ENCODE measurements at regions of chr9 and their contacts with region 1.

Region 1: GRCh38 chr9:130128733-130129431 is 43.3 kb upstream of the NCS1 start:
- DNase-seq: peak; percentile 29
- H3K4me3 Mint-ChIP-seq: peak overlapping the region; percentile 80
- H3K27ac Mint-ChIP-seq: peak overlapping the region; percentile 95
- H3K4me1 Mint-ChIP-seq: peaks cover 46% of the 10 kb centered on the region
- H3K27me3 Mint-ChIP-seq: no peaks in the 10 kb centered on the region

Region 2: GRCh38 chr9:130172161-130172857 is 43.4 kb after region 1 on chr9 and contains the start of gene NCS1:
- intact Hi-C with region 1: loop called (anchors 2 kb)
- DNase-seq: peak; percentile 6
- H3K4me3 Mint-ChIP-seq: peak within 1 kb of the TSS; percentile 73
- H3K27ac Mint-ChIP-seq: peak within 1 kb of the TSS; percentile 44
- H3K4me1 Mint-ChIP-seq: no peaks in the 10 kb centered on the region
- H3K27me3 Mint-ChIP-seq: peaks cover 31% of the 10 kb centered on the region
- total RNA-seq, gene NCS1: 3.9 and 4.2 TPM in 2 replicates

Region 3: GRCh38 chr9:130243015-130243734 is 114.3 kb after region 1 on chr9:
- intact Hi-C with region 1: loop called (anchors 1 kb)
- DNase-seq: peak; percentile 61
- H3K4me3 Mint-ChIP-seq: no peak overlapping the region
- H3K27ac Mint-ChIP-seq: no peak overlapping the region
- H3K4me1 Mint-ChIP-seq: peaks cover 25% of the 10 kb centered on the region
- H3K27me3 Mint-ChIP-seq: peaks cover 2% of the 10 kb centered on the region